ENCODE measurements at regions of chrX and their contacts with region 1.

Region 1: DNA sequence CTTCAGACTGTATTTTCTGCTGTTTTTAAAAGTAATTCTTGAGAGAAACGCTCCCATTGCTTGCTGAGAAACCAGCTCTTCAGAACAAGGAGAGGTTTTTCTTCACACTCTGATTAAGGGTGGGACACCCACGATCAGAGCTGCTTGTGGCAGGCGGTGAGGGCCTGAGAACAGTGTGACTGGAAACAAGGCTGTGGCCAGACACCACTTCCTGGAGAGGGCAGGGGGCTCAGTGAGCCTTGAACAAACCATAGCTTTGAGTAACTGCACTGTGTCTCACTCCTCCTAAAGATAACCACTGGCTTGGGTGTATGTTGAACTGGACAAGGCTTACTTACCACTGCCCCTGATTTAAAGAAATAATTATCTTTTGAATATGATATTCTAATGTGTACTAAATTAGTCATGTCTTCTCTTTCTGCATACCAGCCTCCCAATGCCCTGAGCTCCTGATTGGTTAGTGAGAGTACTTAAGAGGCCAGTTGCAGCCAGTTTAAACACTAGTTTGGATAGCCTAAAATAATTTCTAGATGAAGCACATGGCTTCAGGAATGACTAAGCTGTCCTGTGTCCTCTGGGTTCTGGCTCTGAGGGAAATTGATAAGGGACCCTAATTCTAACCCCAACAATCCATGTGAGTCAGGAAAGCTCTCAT is 3.7 kb upstream of the GPR82 start:
- DNase-seq: peak; percentile 10 to 68 (median 52)
- ATAC-seq: peak; percentile 85
- H3K4me3 ChIP-seq: no peak overlapping the region
- H3K4me3 Mint-ChIP-seq: peak overlapping the region; percentile 22
- H3K27ac ChIP-seq: no peak overlapping the region
- H3K27ac Mint-ChIP-seq: peak overlapping the region; percentile 64
- H3K4me1 ChIP-seq: peaks cover 33% of the 10 kb centered on the region
- H3K4me1 Mint-ChIP-seq: peaks cover 65% of the 10 kb centered on the region
- H3K27me3 ChIP-seq: no peaks in the 10 kb centered on the region
- H3K27me3 Mint-ChIP-seq: no peaks in the 10 kb centered on the region
- CTCF ChIP-seq: no peak

Region 2: DNA sequence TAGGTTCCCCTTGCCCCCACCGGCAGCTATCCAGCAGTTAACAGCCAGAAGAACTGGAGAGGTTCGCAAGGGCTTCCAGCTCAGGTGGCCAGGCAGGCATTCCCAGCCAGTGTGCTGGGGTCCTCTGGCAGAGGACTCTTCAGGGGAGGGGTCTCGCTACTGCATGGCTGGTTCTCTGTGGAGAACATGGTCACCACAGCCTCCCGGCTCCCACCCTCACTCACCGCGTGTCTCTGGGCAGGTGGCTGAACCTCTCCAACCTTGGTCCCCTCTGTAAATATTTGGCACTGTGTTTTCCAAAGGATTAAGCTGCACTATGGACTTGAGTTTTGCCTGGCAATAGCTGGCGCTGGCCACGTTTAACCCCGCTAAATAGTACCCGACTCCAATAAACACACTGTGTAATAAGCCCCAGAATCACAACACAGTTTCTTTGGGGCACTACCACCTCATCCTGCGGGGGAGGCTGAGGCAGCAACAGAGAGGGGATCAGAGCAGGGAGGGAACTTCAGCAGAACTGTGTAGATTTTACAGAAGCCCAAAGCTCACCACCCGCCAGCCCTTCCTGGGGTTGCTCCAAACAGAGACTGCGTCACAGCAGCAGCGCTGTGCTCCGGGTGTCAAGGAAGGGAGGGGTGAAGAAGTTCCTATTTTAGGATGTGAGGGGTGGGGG is 1637.7 kb before region 1 on chrX:
- CTCF ChIA-PET with region 1: no interaction called
- POLR2A ChIA-PET with region 1: no interaction called
- intact Hi-C with region 1: no loop called
- DNase-seq: peak in 2 of 9 experiments; percentile 26 to 37
- ATAC-seq: peak; percentile 32
- H3K4me3 ChIP-seq: no peak overlapping the region
- H3K4me3 Mint-ChIP-seq: peak overlapping the region; percentile 61
- H3K27ac ChIP-seq: no peak overlapping the region
- H3K27ac Mint-ChIP-seq: peak overlapping the region; percentile 71
- H3K4me1 ChIP-seq: peaks cover 48% of the 10 kb centered on the region
- H3K4me1 Mint-ChIP-seq: peaks cover 64% of the 10 kb centered on the region
- H3K27me3 ChIP-seq: no peaks in the 10 kb centered on the region
- H3K27me3 Mint-ChIP-seq: no peaks in the 10 kb centered on the region
- CTCF ChIP-seq: no peak

Region 3: GRCh38 chrX:41688835-41689234 is 31.4 kb before region 1 on chrX and contains the start of gene GPR34:
- CTCF ChIA-PET with region 1: no interaction called
- POLR2A ChIA-PET with region 1: no interaction called
- intact Hi-C with region 1: loop called in 1 of 2 experiments (anchors 5 kb)
- DNase-seq: peak in 3 of 9 experiments; percentile 33 to 55 (median 34)
- ATAC-seq: peak; percentile 62
- H3K4me3 ChIP-seq: no peak within 1 kb of the TSS
- H3K4me3 Mint-ChIP-seq: no peak within 1 kb of the TSS
- H3K27ac ChIP-seq: no peak within 1 kb of the TSS
- H3K27ac Mint-ChIP-seq: peak within 1 kb of the TSS; percentile 52
- H3K4me1 ChIP-seq: peaks cover 16% of the 10 kb centered on the region
- H3K4me1 Mint-ChIP-seq: peaks cover 47% of the 10 kb centered on the region
- H3K27me3 ChIP-seq: no peaks in the 10 kb centered on the region
- H3K27me3 Mint-ChIP-seq: no peaks in the 10 kb centered on the region
- CTCF ChIP-seq: no peak
- total RNA-seq, gene GPR34: 0.25 TPM in 1 of 2 experiments, not detected in the other

Region 4: DNA sequence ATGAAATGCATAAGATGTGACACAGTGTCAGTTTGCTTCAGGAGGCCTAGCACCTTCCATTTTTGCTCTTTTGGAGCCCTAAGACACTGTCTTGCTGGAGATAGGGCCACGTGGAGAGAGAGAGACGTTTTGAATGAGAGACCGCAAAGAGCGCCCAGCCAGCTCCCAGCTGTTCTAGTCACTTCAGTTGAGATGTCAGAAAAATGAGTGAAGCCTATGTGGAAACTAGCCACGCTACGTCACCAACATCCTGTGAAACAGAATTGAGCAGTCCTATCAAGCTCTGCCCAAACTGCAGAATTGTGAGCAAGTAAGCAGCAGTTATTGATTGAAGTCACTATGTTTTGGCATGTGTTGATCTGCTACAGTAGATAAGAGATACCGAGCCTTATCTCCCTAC is 16.8 kb after region 1 on chrX:
- CTCF ChIA-PET with region 1: no interaction called
- POLR2A ChIA-PET with region 1: no interaction called
- intact Hi-C with region 1: no loop called
- DNase-seq: peak in 5 of 9 experiments; percentile 10 to 58 (median 42)
- ATAC-seq: peak; percentile 80
- H3K4me3 ChIP-seq: no peak overlapping the region
- H3K4me3 Mint-ChIP-seq: no peak overlapping the region
- H3K27ac ChIP-seq: no peak overlapping the region
- H3K27ac Mint-ChIP-seq: peak overlapping the region; percentile 76
- H3K4me1 ChIP-seq: peaks cover 7% of the 10 kb centered on the region
- H3K4me1 Mint-ChIP-seq: peaks cover 33% of the 10 kb centered on the region
- H3K27me3 ChIP-seq: no peaks in the 10 kb centered on the region
- H3K27me3 Mint-ChIP-seq: no peaks in the 10 kb centered on the region
- CTCF ChIP-seq: no peak

Measured in CD8-positive, alpha-beta T cell (primary cell).